ENCODE measurements at regions of chr1 and their contacts with region 1.

Region 1: DNA sequence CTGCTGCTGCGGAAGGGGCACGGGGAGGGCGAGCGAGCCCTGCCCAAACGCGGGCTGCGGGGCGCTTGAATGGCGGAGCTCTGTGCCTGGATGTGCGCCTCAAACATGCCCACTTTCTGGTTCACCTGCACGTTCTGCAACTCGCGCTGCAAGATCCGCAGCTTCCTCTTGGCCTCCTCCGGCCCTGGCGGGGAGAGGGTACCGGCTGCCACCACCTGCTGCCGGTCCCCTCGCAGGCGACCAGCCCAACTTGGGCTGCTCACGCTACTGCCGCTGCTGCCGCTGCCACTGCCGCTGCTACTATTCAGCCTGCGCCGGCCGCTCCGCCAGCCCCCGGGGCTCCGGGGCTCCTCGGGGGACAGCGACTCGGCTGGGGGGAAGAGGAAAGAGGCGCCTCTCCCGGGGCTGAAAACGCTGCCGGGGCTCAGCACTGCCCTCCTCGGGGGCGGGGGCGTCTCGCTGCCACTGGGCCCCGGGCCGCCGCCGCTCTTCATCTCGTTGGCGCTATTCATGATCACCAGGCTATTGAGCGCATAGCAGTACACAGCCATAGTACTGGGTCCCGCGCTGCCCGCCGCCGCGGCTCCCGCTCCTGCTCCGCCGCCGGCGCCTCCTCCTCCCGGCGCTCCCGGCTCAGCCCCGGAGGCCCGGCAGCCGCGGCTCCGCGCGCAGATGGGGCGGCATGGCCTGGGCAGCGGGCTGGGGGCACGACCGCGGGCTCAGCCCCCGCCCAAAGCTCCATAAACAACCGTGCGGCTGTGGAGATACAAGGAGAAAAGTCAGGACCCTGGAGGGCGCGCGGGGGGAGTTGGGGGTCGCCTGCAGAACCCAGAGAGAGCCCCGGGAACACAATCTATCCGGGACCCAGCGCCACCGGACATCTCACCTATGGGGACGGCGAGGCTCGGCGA is 1.9 kb downstream of the ITPKB start:
- DNase-seq: peak in 1 of 2 experiments; percentile 7
- H3K4me3 ChIP-seq: peak overlapping the region; percentile 92
- H3K27ac ChIP-seq: no peak overlapping the region
- H3K4me1 ChIP-seq: peaks cover 16% of the 10 kb centered on the region
- H3K27me3 ChIP-seq: no peaks in the 10 kb centered on the region
- CTCF ChIP-seq: no peak

Region 2: GRCh38 chr1:226626577-226626956 is 110.6 kb before region 1 on chr1:
- CTCF ChIA-PET with region 1: no interaction called
- POLR2A ChIA-PET with region 1: interaction called, 12 read pairs
- intact Hi-C with region 1: no loop called
- DNase-seq: peak; percentile 39 to 73
- H3K4me3 ChIP-seq: no peak overlapping the region
- H3K27ac ChIP-seq: no peak overlapping the region
- H3K4me1 ChIP-seq: peaks cover 10% of the 10 kb centered on the region; the same call in 1 of the 2 replicates
- H3K27me3 ChIP-seq: no peaks in the 10 kb centered on the region
- CTCF ChIP-seq: peak; percentile 97

Region 3: GRCh38 chr1:226679853-226680516 is 57.2 kb before region 1 on chr1:
- CTCF ChIA-PET with region 1: no interaction called
- POLR2A ChIA-PET with region 1: interaction called, 22 read pairs
- intact Hi-C with region 1: no loop called
- DNase-seq: peak in 1 of 2 experiments; percentile 61
- H3K4me3 ChIP-seq: no peak overlapping the region
- H3K27ac ChIP-seq: no peak overlapping the region
- H3K4me1 ChIP-seq: no peaks in the 10 kb centered on the region
- H3K27me3 ChIP-seq: no peaks in the 10 kb centered on the region
- CTCF ChIP-seq: no peak

Region 4: DNA sequence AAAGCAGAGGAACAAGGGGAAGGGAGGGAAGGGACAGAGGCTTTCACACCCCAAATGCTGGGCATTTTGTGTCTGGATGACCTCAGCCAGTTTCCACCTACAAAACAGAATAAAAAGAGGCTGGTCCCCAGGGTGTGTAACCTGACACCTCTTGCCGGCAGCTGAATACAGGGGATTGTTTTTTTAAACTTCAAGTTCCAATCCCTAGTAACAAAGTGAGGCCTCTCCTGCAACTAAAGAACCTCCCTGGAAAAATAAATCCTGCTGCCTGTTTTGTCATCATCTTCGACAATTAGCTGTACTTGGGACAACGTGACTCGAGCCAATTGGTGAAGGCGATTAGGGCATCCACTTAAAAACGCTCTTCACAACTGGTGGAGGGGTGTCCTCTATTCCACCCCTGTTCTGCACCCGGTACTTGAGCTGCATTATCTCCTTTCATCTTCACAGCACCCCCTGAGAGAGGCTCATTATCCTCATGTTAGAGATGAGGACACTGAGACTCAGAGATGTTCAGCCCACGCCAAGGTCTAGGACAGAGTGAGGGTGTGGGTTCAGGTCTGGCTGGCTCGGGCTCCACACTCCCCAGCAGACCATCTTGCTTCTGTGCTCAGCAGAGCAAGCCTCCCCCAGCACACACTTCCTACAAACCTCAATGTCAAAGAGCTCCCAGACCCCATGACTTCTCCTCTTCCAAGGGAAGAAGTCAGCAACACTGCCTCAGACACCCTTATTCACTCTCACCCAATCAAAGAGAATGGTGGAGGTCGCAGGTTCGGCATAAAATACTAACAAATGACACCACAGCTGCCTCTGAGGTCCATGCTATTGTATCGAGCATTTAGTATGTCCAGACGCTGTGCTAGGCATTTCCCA is 13.3 kb before region 1 on chr1:
- CTCF ChIA-PET with region 1: no interaction called
- POLR2A ChIA-PET with region 1: no interaction called
- intact Hi-C with region 1: loop called (anchors 2 kb)
- DNase-seq: peak in 1 of 2 experiments; percentile 59
- H3K4me3 ChIP-seq: no peak overlapping the region
- H3K27ac ChIP-seq: no peak overlapping the region
- H3K4me1 ChIP-seq: peaks cover 21% of the 10 kb centered on the region
- H3K27me3 ChIP-seq: no peaks in the 10 kb centered on the region
- CTCF ChIP-seq: no peak

Region 5: DNA sequence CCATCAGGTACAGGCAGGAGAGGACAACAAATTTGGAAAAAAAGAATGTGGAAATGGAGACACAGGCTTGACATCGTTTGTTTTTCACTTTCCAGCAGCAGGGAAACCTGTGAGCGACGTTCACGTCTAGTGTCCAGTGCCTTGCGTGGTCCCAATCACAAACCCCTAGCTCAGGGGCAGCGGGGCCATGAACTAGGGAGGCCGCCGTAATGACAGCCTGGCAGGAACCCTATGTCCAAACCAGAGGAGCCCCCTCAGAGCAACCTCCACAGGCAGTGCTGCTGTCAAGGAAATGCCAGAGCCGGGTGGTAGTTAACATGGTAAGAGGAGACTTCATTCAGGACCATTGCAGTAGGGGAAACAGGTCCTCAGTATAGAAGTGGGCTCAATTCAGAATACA is 95.5 kb after region 1 on chr1:
- CTCF ChIA-PET with region 1: no interaction called
- POLR2A ChIA-PET with region 1: no interaction called
- intact Hi-C with region 1: no loop called
- DNase-seq: no peak
- H3K4me3 ChIP-seq: no peak overlapping the region
- H3K27ac ChIP-seq: no peak overlapping the region
- H3K4me1 ChIP-seq: peaks cover 29% of the 10 kb centered on the region
- H3K27me3 ChIP-seq: no peaks in the 10 kb centered on the region
- CTCF ChIP-seq: no peak

Region 6: DNA sequence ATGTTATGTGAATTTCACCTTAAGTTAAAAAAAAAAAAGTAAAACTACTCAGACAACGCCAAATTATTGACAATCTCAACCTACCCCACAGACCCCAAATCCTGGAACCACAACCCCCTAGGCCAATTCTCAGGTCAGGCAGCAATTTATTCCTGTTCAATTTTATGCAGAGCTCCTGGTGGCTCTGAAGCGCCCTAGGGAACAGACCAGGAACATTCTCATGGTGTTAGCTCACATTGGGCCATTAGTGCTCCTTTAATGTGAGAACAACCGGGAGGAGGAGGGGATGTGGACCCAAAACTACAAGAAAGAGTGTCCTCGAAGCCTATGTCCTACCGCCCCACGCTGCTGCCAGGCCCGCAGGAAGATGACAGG is 132.8 kb after region 1 on chr1:
- CTCF ChIA-PET with region 1: no interaction called
- POLR2A ChIA-PET with region 1: interaction called, 11 read pairs
- intact Hi-C with region 1: no loop called
- DNase-seq: peak in 1 of 2 experiments; percentile 50
- H3K4me3 ChIP-seq: peak overlapping the region; percentile 83; the same call in 1 of the 2 replicates
- H3K27ac ChIP-seq: peak overlapping the region; percentile 43
- H3K4me1 ChIP-seq: peaks cover 62% of the 10 kb centered on the region
- H3K27me3 ChIP-seq: no peaks in the 10 kb centered on the region
- CTCF ChIP-seq: no peak

Measured in PC-9 (cell line).